IMR-90 (cell line): ENCODE measurements at regions of chr15 and their contacts with region 1.

Region 1: DNA sequence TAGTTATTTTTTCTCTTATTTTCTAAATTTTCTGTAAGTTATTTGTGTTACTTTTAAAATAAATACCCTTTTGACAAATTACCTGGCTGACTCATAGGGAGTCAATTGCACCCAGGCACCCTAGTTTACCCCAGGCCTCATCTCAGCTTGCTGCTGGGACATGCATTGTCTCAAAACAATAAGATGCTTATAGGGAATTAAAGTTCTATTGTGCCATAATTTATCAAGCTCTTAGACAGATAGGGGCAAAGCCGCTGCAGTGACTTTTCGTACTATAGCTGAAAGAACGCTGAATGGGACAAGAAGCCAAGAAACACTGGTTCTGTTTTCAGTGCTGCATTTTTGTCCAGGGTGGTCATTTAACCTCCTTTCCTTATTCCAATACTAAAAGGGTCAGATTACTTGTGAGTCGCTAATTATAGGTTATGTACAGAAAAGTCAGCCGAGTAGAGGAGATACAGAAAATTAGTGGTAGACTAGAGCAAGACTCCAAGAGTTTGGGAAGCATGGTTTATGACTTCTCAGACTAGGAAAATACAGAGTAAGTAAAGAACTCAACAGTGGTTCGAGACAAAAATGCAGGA is 50.3 kb downstream of the EXD1 start:
- DNase-seq: peak; percentile 64
- ATAC-seq: peak; percentile 33; the same call in 1 of the 2 replicates
- H3K4me3 ChIP-seq: no peak overlapping the region
- H3K27ac ChIP-seq: no peak overlapping the region
- H3K4me1 ChIP-seq: peaks cover 11% of the 10 kb centered on the region; the same call in 1 of the 2 replicates
- H3K27me3 ChIP-seq: no peaks in the 10 kb centered on the region
- CTCF ChIP-seq: no peak
- POLR2A ChIP-seq: no peak
- RAD21 ChIP-seq: no peak

Region 2: GRCh38 chr15:41022487-41023090 is 157.7 kb before region 1 on chr15:
- CTCF ChIA-PET with region 1: no interaction called
- POLR2A ChIA-PET with region 1: no interaction called
- dilution Hi-C with region 1: no loop called
- in situ Hi-C with region 1: no loop called
- intact Hi-C with region 1: loop called (anchors 2 kb)
- DNase-seq: peak; percentile 75
- ATAC-seq: peak; percentile 69
- H3K4me3 ChIP-seq: no peak overlapping the region
- H3K27ac ChIP-seq: no peak overlapping the region
- H3K4me1 ChIP-seq: peaks cover 14% of the 10 kb centered on the region
- H3K27me3 ChIP-seq: no peaks in the 10 kb centered on the region
- CTCF ChIP-seq: peak; percentile 90
- POLR2A ChIP-seq: peak; percentile 43; the same call in 1 of the 2 replicates
- RAD21 ChIP-seq: peak; percentile 93

Region 3: GRCh38 chr15:41096178-41096577 is 84.1 kb before region 1 on chr15:
- CTCF ChIA-PET with region 1: no interaction called
- POLR2A ChIA-PET with region 1: interaction called, 12 read pairs
- dilution Hi-C with region 1: no loop called
- in situ Hi-C with region 1: no loop called
- intact Hi-C with region 1: loop called (anchors 5 kb)
- DNase-seq: no peak
- ATAC-seq: no peak
- H3K4me3 ChIP-seq: no peak overlapping the region
- H3K27ac ChIP-seq: no peak overlapping the region
- H3K4me1 ChIP-seq: no peaks in the 10 kb centered on the region
- H3K27me3 ChIP-seq: no peaks in the 10 kb centered on the region
- CTCF ChIP-seq: no peak
- POLR2A ChIP-seq: no peak
- RAD21 ChIP-seq: no peak

Region 4: GRCh38 chr15:41104234-41104633 is 76.1 kb before region 1 on chr15:
- CTCF ChIA-PET with region 1: interaction called, 3 read pairs
- POLR2A ChIA-PET with region 1: no interaction called
- dilution Hi-C with region 1: no loop called
- in situ Hi-C with region 1: no loop called
- intact Hi-C with region 1: loop called (anchors 5 kb)
- DNase-seq: peak; percentile 79
- ATAC-seq: peak; percentile 82
- H3K4me3 ChIP-seq: no peak overlapping the region
- H3K27ac ChIP-seq: no peak overlapping the region
- H3K4me1 ChIP-seq: peaks cover 3% of the 10 kb centered on the region
- H3K27me3 ChIP-seq: no peaks in the 10 kb centered on the region
- CTCF ChIP-seq: no peak
- POLR2A ChIP-seq: no peak
- RAD21 ChIP-seq: no peak

Region 5: DNA sequence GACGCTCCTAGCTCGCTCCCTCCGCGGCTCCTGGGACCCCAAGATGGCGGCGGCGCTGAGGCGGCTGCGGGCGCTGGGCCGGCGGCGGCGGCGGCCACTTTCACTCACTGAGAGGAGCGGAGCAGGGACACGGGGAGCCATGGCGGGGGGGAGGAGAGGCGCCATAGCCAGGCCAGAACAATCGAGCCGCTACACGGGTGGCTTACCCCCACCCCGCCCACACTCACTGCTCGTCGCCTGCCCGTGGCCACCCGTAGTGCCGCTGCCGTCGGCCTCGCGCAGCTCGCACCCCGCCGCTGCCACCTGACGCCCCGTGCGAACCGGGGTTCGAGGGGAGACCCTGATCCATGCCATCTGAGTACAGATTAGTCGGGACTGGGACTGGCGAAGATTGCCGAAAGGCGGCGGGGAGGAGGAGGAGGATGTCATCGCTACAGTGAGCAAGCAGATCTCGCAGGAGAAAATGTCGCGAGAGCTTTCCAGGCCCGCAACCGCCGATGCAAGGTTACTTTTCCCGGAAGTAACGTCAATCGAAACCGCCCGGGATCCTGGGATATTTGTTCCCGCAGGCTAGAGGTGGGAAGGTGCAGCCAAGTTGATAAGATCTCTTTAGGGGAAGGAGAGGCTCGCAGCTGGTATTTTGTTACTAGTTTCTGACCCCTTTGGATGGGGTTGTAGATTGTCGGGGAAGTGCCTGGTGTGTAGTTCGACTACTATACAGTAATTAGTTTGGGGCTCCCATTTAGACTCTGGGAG is 64.0 kb before region 1 on chr15 and contains the start of gene INO80:
- CTCF ChIA-PET with region 1: no interaction called
- POLR2A ChIA-PET with region 1: interaction called, 8 read pairs
- dilution Hi-C with region 1: no loop called
- in situ Hi-C with region 1: no loop called
- intact Hi-C with region 1: loop called (anchors 2 kb)
- DNase-seq: peak; percentile 99
- ATAC-seq: peak; percentile 93
- H3K4me3 ChIP-seq: peak within 1 kb of the TSS; percentile 75
- H3K27ac ChIP-seq: peak within 1 kb of the TSS; percentile 98
- H3K4me1 ChIP-seq: no peaks in the 10 kb centered on the region; the same call in 1 of the 2 replicates
- H3K27me3 ChIP-seq: no peaks in the 10 kb centered on the region
- CTCF ChIP-seq: no peak
- POLR2A ChIP-seq: peak; percentile 76
- RAD21 ChIP-seq: no peak
- total RNA-seq, gene INO80: 13.3 and 15.6 TPM in 2 replicates